Esophagus squamous epithelium (tissue), 5 donors: ENCODE measurements at regions of chr3 and their contacts with region 1.

Region 1: GRCh38 chr3:170317954-170318353 is 39.6 kb upstream of the SKIL start:
- DNase-seq: no peak
- H3K4me3 ChIP-seq: no peak overlapping the region
- H3K27ac ChIP-seq: no peak overlapping the region
- H3K4me1 ChIP-seq: no peaks in the 10 kb centered on the region
- H3K27me3 ChIP-seq: no peaks in the 10 kb centered on the region
- CTCF ChIP-seq: no peak
- POLR2A ChIP-seq: no peak

Region 2: GRCh38 chr3:170405101-170405500 is 87.1 kb after region 1 on chr3:
- intact Hi-C with region 1: loop called (anchors 10 kb)
- DNase-seq: no peak
- H3K4me3 ChIP-seq: no peak overlapping the region
- H3K27ac ChIP-seq: no peak overlapping the region
- H3K4me1 ChIP-seq: no peaks in the 10 kb centered on the region
- H3K27me3 ChIP-seq: no peaks in the 10 kb centered on the region
- CTCF ChIP-seq: no peak
- POLR2A ChIP-seq: no peak